Endothelial cell of umbilical vein (primary cell): ENCODE measurements at regions of chr6 and their contacts with region 1.

Region 1: DNA sequence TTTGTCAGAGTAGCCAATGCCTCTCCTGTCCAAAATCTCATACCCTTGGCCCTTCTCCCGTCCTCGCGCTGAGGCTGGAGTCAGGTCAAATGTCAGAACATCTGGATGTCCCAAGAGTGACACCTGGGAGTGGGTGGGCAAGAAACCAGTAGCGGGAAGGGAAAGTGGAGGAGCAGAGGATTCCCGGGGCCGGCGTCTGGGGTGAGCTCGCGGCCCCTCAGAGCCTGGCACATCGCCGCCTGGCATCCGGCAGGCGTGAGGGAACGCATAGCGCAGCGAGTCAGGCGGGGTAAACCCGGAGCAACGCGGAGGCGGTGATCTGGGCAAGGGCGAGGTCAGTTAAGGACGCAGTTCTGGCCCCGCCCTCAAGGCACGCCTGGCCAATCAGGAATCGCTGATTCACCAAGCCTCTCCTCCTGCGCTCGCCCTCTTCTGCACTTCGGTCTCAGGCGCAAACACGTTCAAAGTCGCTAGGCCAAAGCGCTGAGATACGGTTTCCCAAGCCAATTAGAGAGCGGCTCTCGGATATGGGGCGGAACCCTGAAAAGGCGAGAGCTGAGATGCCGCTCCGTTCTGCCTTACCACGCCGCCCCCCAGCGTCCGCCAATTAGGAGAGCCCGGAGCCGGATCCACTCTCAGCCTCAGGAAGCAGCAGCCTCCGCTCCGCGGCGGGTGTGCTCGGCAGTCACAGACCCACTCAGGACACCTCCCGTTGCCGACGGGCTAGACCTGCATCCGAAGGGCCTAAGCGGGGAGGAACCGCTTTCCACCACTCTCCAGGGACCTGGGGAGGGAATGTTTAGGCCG is 22.5 kb downstream of the VPS52 start:
- DNase-seq: peak; percentile 100
- H3K4me3 ChIP-seq: peak overlapping the region; percentile 18 to 69 (median 38)
- H3K27ac ChIP-seq: peak overlapping the region; percentile 72
- H3K4me1 ChIP-seq: peaks cover 23% of the 10 kb centered on the region
- H3K27me3 ChIP-seq: peaks cover 0 to 2% of the 10 kb centered on the region in 2 experiments
- CTCF ChIP-seq: peak in 1 of 2 donors; percentile 21
- POLR2A ChIP-seq: peak; percentile 93

Region 2: DNA sequence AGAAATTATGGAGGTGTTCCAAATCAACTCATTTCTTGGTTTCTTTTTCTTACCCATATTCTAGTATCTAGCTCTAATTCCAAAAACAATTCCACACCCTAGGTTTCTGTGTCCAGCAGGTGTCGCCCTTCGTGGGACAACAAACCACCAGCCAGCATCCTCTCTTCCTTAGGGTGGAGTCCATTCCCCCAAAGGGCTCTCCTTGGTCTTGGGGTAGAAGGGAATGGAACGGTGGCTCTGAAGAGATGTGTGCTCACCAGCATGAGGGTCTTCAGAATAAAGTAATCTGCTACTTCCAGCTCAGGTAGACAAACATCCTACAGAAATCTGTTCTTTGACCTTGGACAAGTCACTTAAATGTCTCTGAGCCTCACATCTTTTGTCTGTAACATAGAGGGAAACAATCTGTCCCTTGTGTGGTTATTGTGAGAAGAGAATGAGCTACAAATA is 315.5 kb before region 1 on chr6:
- CTCF ChIA-PET with region 1: interaction called, 29 read pairs
- POLR2A ChIA-PET with region 1: no interaction called
- dilution Hi-C with region 1: no loop called
- intact Hi-C with region 1: no loop called
- DNase-seq: peak; percentile 76
- H3K4me3 ChIP-seq: no peak overlapping the region
- H3K27ac ChIP-seq: no peak overlapping the region
- H3K4me1 ChIP-seq: no peaks in the 10 kb centered on the region
- H3K27me3 ChIP-seq: peaks cover 41 to 73% of the 10 kb centered on the region in 2 experiments
- CTCF ChIP-seq: peak; percentile 73
- POLR2A ChIP-seq: no peak

Region 3: GRCh38 chr6:33040157-33040556 is 209.0 kb before region 1 on chr6:
- CTCF ChIA-PET with region 1: no interaction called
- POLR2A ChIA-PET with region 1: no interaction called
- dilution Hi-C with region 1: no loop called
- intact Hi-C with region 1: no loop called
- DNase-seq: no peak
- H3K4me3 ChIP-seq: no peak overlapping the region
- H3K27ac ChIP-seq: no peak overlapping the region
- H3K4me1 ChIP-seq: no peaks in the 10 kb centered on the region
- H3K27me3 ChIP-seq: peaks cover 13 to 21% of the 10 kb centered on the region in 2 experiments
- CTCF ChIP-seq: no peak
- POLR2A ChIP-seq: no peak

Region 4: DNA sequence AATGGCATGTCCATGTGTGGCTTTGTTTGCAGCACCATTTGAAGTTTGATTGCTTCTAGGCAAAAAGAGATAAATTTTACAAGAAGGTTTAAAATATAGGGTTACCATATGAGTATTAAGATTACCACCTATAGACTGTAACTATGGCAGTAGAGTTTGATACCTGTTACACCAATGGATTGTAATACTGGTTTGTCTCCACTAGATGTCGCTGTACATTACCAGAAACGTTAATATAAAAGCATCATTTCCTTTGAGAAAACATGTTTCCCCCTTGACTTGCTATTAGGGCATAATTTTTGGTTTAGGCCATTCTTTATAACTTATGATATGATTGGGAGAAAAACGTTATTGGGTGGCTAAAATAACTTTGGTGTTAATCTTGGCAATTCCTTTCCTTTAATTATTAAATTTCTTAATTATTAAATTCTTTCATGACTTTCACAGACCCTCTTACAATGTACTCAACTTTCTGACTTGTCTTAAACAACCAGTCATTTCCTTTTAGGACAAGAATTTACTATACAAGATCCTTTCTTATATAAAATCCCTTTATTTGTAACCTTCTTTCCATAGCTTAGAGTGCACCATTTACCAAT is 130.5 kb before region 1 on chr6:
- CTCF ChIA-PET with region 1: interaction called, 55 read pairs
- POLR2A ChIA-PET with region 1: no interaction called
- dilution Hi-C with region 1: no loop called
- intact Hi-C with region 1: loop called (anchors 1 kb)
- DNase-seq: peak; percentile 57
- H3K4me3 ChIP-seq: no peak overlapping the region
- H3K27ac ChIP-seq: no peak overlapping the region
- H3K4me1 ChIP-seq: no peaks in the 10 kb centered on the region
- H3K27me3 ChIP-seq: peaks cover 44 to 46% of the 10 kb centered on the region in 2 experiments
- CTCF ChIP-seq: peak; percentile 38 to 48
- POLR2A ChIP-seq: no peak

Region 5: GRCh38 chr6:33147807-33148666 is 101.1 kb before region 1 on chr6:
- CTCF ChIA-PET with region 1: interaction called, 13 read pairs
- POLR2A ChIA-PET with region 1: interaction called, 7 read pairs
- dilution Hi-C with region 1: no loop called
- intact Hi-C with region 1: no loop called
- DNase-seq: peak; percentile 49
- H3K4me3 ChIP-seq: no peak overlapping the region
- H3K27ac ChIP-seq: no peak overlapping the region
- H3K4me1 ChIP-seq: no peaks in the 10 kb centered on the region
- H3K27me3 ChIP-seq: peaks cover 10 to 27% of the 10 kb centered on the region in 2 experiments
- CTCF ChIP-seq: peak; percentile 66 to 69
- POLR2A ChIP-seq: no peak

Region 6: GRCh38 chr6:33200219-33201146 is 48.6 kb before region 1 on chr6 and contains the starts of genes RXRB and SLC39A7:
- CTCF ChIA-PET with region 1: interaction called, 24 read pairs
- POLR2A ChIA-PET with region 1: interaction called, 3 read pairs
- dilution Hi-C with region 1: no loop called
- intact Hi-C with region 1: loop called (anchors 1 kb)
- DNase-seq: peak; percentile 100
- H3K4me3 ChIP-seq: peak within 1 kb of the TSS; percentile 75 to 92 (median 76)
- H3K27ac ChIP-seq: peak within 1 kb of the TSS; percentile 95
- H3K4me1 ChIP-seq: peaks cover 30% of the 10 kb centered on the region
- H3K27me3 ChIP-seq: no peaks in the 10 kb centered on the region
- CTCF ChIP-seq: no peak
- POLR2A ChIP-seq: peak; percentile 77
- total RNA-seq, gene RXRB: 43.4 and 45.6 TPM in 2 replicates
- total RNA-seq, gene SLC39A7: 129 and 138 TPM in 2 replicates

Region 7: GRCh38 chr6:33235221-33235634 is 13.9 kb before region 1 on chr6:
- CTCF ChIA-PET with region 1: interaction called, 43 read pairs
- POLR2A ChIA-PET with region 1: no interaction called
- dilution Hi-C with region 1: no loop called
- intact Hi-C with region 1: no loop called
- DNase-seq: no peak
- H3K4me3 ChIP-seq: no peak overlapping the region
- H3K27ac ChIP-seq: no peak overlapping the region
- H3K4me1 ChIP-seq: no peaks in the 10 kb centered on the region
- H3K27me3 ChIP-seq: peaks cover 18 to 26% of the 10 kb centered on the region in 2 experiments
- CTCF ChIP-seq: no peak
- POLR2A ChIP-seq: no peak